Breast epithelium (tissue), 4 donors: ENCODE measurements at regions of chr4 and their contacts with region 1.

Region 1: GRCh38 chr4:68175562-68176155 is 46.0 kb upstream of the TMPRSS11F start:
- DNase-seq: no peak
- H3K4me3 ChIP-seq: no peak overlapping the region
- H3K27ac ChIP-seq: no peak overlapping the region
- H3K4me1 ChIP-seq: no peaks in the 10 kb centered on the region
- H3K27me3 ChIP-seq: no peaks in the 10 kb centered on the region
- CTCF ChIP-seq: peak in 1 of 3 donors; percentile 36
- POLR2A ChIP-seq: no peak

Region 2: GRCh38 chr4:68147079-68147478 is 28.6 kb before region 1 on chr4:
- intact Hi-C with region 1: loop called (anchors 1 kb)
- DNase-seq: no peak
- H3K4me3 ChIP-seq: no peak overlapping the region
- H3K27ac ChIP-seq: no peak overlapping the region
- H3K4me1 ChIP-seq: no peaks in the 10 kb centered on the region
- H3K27me3 ChIP-seq: no peaks in the 10 kb centered on the region
- CTCF ChIP-seq: no peak
- POLR2A ChIP-seq: no peak